ENCODE measurements at regions of chr12 and their contacts with region 1.

Region 1: GRCh38 chr12:53701518-53702260 is 25.6 kb downstream of the CALCOCO1 start:
- DNase-seq: peak; percentile 85
- H3K4me3 Mint-ChIP-seq: no peak overlapping the region
- H3K27ac Mint-ChIP-seq: no peak overlapping the region
- H3K4me1 Mint-ChIP-seq: peaks cover 6% of the 10 kb centered on the region
- H3K27me3 Mint-ChIP-seq: peaks cover 88% of the 10 kb centered on the region

Region 2: DNA sequence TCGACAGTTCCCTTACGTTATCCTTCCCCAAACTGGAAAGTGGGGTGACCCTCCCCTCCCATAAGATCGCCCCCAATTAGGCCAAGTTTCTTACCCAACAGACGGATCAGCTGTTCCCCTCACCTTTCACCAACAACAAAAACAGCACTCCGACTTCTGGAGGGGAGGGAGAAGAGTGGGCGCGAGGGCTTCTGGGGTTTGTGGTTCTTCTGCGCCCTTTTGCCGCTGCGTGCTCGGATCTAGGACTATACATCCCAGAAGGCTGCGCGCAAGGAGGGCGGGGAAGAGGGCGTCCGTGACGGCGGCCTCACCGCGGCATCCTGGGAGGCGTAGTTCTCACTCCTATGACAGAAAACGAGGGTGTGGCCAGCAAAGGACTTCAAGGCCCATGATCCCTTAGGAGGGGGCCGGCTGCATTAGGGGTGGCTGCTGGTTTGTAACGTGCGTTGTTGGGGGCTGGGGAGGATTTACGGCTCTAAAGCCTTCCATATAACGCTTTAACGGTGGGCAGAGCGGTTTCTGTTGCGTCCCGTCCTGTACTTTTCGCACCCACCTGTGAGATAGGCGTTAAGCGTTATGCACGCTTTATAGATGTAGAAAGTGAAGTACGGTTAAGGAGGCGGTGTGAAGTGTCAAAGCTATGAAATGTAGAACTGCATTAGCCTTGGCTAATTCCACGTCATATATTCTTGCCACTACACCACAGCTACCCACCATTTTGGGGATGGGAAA is 25.8 kb after region 1 on chr12 and contains the start of gene CALCOCO1:
- CTCF ChIA-PET with region 1: interaction called, 18 read pairs
- DNase-seq: peak; percentile 99
- H3K4me3 Mint-ChIP-seq: peak within 1 kb of the TSS; percentile 89
- H3K27ac Mint-ChIP-seq: peak within 1 kb of the TSS; percentile 91
- H3K4me1 Mint-ChIP-seq: peaks cover 27% of the 10 kb centered on the region
- H3K27me3 Mint-ChIP-seq: peaks cover 4% of the 10 kb centered on the region

Region 3: DNA sequence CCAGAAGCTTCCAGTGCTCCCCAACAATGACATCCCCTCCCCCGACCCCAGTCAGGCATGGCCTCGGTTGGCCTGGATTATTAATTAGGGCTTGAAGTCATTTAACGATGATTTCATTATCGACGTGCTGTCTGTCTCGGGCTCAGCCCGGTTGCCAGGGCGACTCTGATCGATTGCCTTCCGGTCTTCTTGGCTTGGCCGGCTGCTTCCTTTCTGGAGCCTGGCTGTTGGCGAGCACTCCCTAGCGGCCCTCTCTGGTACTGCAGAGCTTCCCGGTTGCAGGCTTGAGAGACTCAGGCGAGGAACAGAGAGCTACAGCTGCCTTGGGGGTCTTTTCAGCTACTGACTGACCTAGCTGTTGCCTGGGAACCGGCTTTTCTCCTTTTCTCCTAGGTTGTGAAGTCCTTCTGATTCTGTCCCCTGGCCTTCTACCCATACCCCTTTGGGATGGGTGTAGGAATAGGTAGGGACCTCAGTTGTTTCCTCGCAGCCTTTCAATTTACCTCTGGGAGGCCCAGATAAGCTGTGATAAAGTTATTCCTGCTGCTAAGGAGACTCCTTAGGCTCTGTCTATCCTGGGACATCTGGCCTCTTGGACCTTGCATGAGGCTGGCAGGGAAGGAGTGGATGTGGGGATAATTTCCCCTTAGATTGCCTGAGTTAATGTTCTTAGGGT is 55.5 kb after region 1 on chr12:
- CTCF ChIA-PET with region 1: interaction called, 15 read pairs
- DNase-seq: peak; percentile 89
- H3K4me3 Mint-ChIP-seq: peak overlapping the region; percentile 25
- H3K27ac Mint-ChIP-seq: no peak overlapping the region
- H3K4me1 Mint-ChIP-seq: peaks cover 15% of the 10 kb centered on the region
- H3K27me3 Mint-ChIP-seq: peaks cover 49% of the 10 kb centered on the region

Region 4: GRCh38 chr12:53820516-53821306 is 119.0 kb after region 1 on chr12:
- CTCF ChIA-PET with region 1: no interaction called
- DNase-seq: no peak
- H3K4me3 Mint-ChIP-seq: no peak overlapping the region
- H3K27ac Mint-ChIP-seq: no peak overlapping the region
- H3K4me1 Mint-ChIP-seq: no peaks in the 10 kb centered on the region
- H3K27me3 Mint-ChIP-seq: peaks cover 66% of the 10 kb centered on the region

Region 5: DNA sequence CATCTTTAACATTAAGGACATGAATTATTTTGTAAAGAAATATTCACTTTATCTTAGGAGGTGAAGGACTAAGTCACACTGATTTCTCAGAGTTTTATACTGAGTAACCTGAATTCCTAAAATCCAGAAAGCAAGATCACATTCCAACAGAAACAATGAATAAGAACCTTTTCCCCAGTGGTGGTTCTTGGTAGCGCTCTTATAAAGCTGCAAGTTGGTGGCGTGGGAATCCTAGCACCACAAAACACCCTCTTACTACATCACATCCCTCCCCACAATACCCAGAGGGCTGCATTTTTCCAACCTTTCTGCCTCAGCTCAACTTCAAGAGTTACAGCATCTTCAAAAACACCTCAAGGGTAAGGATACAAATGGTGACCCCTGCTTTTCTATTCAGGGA is 531.1 kb after region 1 on chr12:
- CTCF ChIA-PET with region 1: no interaction called
- DNase-seq: no peak
- H3K4me3 Mint-ChIP-seq: no peak overlapping the region
- H3K27ac Mint-ChIP-seq: no peak overlapping the region
- H3K4me1 Mint-ChIP-seq: peaks cover 9% of the 10 kb centered on the region
- H3K27me3 Mint-ChIP-seq: no peaks in the 10 kb centered on the region

Measured in activated naive CD4-positive, alpha-beta T cell treated with anti-CD3 and anti-CD28 coated beads, Interleukin-2, amount 10 ng/mL, durations not matched to agents 7 days and 5 days (primary cell).